Activated CD4-positive, alpha-beta memory T cell treated with anti-CD3 and anti-CD28 coated beads, Interleukin-2, amount 10 ng/mL, durations not matched to agents 7 days and 5 days (primary cell): ENCODE measurements at regions of chr6 and their contacts with region 1.

Region 1: GRCh38 chr6:36874443-36875249 is at the start of gene PPIL1:
- DNase-seq: peak; percentile 83
- H3K4me3 Mint-ChIP-seq: peak within 1 kb of the TSS; percentile 92
- H3K27ac Mint-ChIP-seq: peak within 1 kb of the TSS; percentile 95
- H3K4me1 Mint-ChIP-seq: peaks cover 57% of the 10 kb centered on the region
- H3K27me3 Mint-ChIP-seq: no peaks in the 10 kb centered on the region
- total RNA-seq, gene PPIL1: 22.8 to 24.3 TPM

Region 2: DNA sequence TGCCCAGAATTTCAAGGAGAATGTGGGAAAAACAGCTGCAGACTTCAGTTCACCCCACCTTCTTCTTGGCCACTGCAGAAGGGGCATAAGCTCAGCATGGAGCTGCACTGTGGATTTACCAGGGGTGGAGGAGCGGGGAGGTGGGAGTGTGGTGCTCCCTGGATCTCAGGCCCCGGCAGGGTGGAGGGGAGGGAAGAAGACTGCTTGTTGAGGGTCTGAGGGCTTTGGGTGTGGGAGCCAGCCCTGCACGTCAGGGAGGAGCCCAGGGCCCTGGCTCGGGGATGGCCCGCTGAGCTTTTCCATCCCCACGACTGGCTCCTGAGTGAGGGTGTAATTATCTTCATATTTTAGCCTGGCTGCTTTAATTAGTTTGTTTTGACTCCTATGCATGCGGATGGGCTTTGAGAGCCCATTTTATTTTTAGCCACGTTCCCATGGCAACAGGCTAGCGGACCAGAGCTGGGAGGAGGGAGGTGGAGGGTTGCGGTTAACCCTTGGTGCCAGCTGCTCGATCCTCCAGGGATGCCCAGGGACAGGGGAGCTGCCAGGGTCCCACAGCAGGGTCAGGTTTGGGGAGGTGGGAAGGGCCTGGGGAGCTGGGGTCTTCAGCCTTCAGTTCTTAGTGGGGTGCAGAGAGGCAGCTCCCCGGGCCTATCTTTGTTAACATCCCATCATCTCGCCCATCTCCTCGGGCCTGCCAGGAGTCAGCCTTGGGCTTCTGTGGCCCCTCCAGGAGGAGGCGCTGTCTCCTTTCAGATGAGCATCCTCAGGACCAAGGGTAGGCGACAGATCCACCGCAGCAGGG is 108.8 kb before region 1 on chr6:
- CTCF ChIA-PET with region 1: interaction called, 42 read pairs
- POLR2A ChIA-PET with region 1: interaction called, 13 read pairs
- DNase-seq: peak; percentile 87
- H3K4me3 Mint-ChIP-seq: no peak overlapping the region
- H3K27ac Mint-ChIP-seq: no peak overlapping the region
- H3K4me1 Mint-ChIP-seq: peaks cover 39% of the 10 kb centered on the region
- H3K27me3 Mint-ChIP-seq: no peaks in the 10 kb centered on the region

Region 3: DNA sequence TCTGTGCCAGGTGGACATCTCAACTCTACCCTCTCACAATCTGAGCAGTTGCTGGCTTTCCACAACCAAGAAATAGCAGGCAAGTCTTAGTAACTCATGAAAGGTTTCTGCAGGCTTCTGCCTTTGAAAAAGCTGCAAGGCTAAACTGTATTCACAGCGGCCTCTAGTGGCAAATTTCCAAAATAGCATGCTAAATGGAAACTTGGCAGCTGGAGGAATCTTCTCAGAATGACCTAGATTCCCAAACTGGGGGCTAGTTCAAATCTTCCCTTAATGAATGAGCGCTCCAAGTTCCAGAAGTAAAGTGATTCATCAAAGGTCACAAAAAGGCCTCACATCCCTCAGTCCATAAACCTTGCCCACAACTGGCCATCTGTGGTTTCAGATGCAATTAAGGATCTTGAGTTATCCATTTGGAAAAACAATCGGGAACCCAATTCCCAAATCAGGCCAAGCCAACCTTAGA is 23.5 kb before region 1 on chr6:
- CTCF ChIA-PET with region 1: interaction called, 14 read pairs
- POLR2A ChIA-PET with region 1: interaction called, 24 read pairs
- DNase-seq: peak; percentile 46
- H3K4me3 Mint-ChIP-seq: no peak overlapping the region
- H3K27ac Mint-ChIP-seq: no peak overlapping the region
- H3K4me1 Mint-ChIP-seq: peaks cover 5% of the 10 kb centered on the region
- H3K27me3 Mint-ChIP-seq: no peaks in the 10 kb centered on the region

Region 4: GRCh38 chr6:36885461-36886401 is 11.1 kb after region 1 on chr6 and contains the start of gene C6orf89:
- CTCF ChIA-PET with region 1: interaction called, 89 read pairs
- POLR2A ChIA-PET with region 1: interaction called, 48 read pairs
- DNase-seq: peak; percentile 98
- H3K4me3 Mint-ChIP-seq: peak within 1 kb of the TSS; percentile 89
- H3K27ac Mint-ChIP-seq: peak within 1 kb of the TSS; percentile 76
- H3K4me1 Mint-ChIP-seq: peaks cover 36% of the 10 kb centered on the region
- H3K27me3 Mint-ChIP-seq: no peaks in the 10 kb centered on the region
- total RNA-seq, gene C6orf89: 51.8 to 53.8 TPM

Region 5: GRCh38 chr6:36985808-36986703 is 111.4 kb after region 1 on chr6 and contains the start of gene MTCH1:
- CTCF ChIA-PET with region 1: no interaction called
- POLR2A ChIA-PET with region 1: interaction called, 18 read pairs
- DNase-seq: peak; percentile 89
- H3K4me3 Mint-ChIP-seq: peak within 1 kb of the TSS; percentile 99
- H3K27ac Mint-ChIP-seq: peak within 1 kb of the TSS; percentile 92
- H3K4me1 Mint-ChIP-seq: peaks cover 21% of the 10 kb centered on the region
- H3K27me3 Mint-ChIP-seq: peaks cover 4% of the 10 kb centered on the region
- total RNA-seq, gene MTCH1: 131 TPM